ENCODE measurements at regions of chr1 and their contacts with region 1.

Region 1: GRCh38 chr1:16243936-16244649 is 7.1 kb upstream of the CPLANE2 start:
- DNase-seq: peak; percentile 78 to 83
- ATAC-seq: peak; percentile 64 to 69 (median 66)
- H3K4me3 ChIP-seq: no peak overlapping the region
- H3K27ac ChIP-seq: no peak overlapping the region
- H3K4me1 ChIP-seq: peaks cover 23% of the 10 kb centered on the region
- H3K27me3 ChIP-seq: no peaks in the 10 kb centered on the region
- CTCF ChIP-seq: peak; percentile 80

Region 2: DNA sequence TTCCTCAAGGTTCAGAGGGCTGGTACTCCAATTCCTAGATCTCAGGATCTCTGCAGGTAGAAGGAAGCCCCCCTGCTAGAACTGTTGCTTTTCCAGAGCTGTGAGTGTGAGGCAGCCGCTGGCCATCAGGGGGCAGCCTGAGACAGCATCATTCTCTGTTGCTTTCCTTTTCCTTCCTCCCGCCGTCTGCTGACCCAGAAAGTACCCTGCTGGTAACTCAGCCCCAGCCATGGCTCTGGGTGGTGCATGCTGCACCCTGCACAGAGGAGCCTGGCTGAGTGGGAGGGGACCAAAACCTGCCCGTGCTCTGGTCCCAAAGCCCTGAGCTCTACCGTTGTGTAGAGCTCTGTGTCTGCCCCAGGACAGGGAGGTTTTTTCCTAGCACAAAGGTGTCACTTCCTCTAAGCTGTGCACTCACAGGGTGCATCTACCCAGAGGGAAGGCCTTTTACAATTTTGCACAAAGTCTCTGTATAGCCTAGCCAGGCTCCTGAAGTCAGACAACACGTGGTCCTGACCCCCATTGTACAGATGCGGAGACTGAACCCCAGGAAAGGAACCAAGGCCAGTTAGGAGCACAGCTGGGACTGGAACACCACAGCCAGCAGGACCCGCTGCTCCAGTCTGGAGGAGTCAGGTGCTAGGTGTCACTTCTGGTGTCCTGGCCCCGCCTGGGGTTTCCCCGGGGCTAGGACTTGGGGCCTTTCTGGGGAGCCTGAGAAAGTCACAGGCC is 165.0 kb before region 1 on chr1:
- intact Hi-C with region 1: loop called (anchors 1 to 5 kb)
- DNase-seq: peak; percentile 78 to 84
- ATAC-seq: peak; percentile 64 to 76 (median 71)
- H3K4me3 ChIP-seq: no peak overlapping the region
- H3K27ac ChIP-seq: no peak overlapping the region
- H3K4me1 ChIP-seq: no peaks in the 10 kb centered on the region
- H3K27me3 ChIP-seq: peaks cover 0 to under 1% (median 0%) of the 10 kb centered on the region in 3 donors
- CTCF ChIP-seq: peak; percentile 86

Region 3: GRCh38 chr1:16187748-16188401 is 56.2 kb before region 1 on chr1:
- intact Hi-C with region 1: loop called in 1 of 2 experiments (anchors 2 kb)
- DNase-seq: peak; percentile 80 to 81
- ATAC-seq: peak; percentile 74 to 86 (median 77)
- H3K4me3 ChIP-seq: no peak overlapping the region
- H3K27ac ChIP-seq: no peak overlapping the region
- H3K4me1 ChIP-seq: no peaks in the 10 kb centered on the region
- H3K27me3 ChIP-seq: peaks cover 0 to 10% (median 9%) of the 10 kb centered on the region in 3 donors
- CTCF ChIP-seq: peak; percentile 93

Region 4: GRCh38 chr1:16258591-16259135 is 14.6 kb after region 1 on chr1:
- intact Hi-C with region 1: loop called in 1 of 2 experiments (anchors 2 kb)
- DNase-seq: no peak
- ATAC-seq: no peak
- H3K4me3 ChIP-seq: no peak overlapping the region
- H3K27ac ChIP-seq: no peak overlapping the region
- H3K4me1 ChIP-seq: no peaks in the 10 kb centered on the region
- H3K27me3 ChIP-seq: no peaks in the 10 kb centered on the region
- CTCF ChIP-seq: no peak

Region 5: DNA sequence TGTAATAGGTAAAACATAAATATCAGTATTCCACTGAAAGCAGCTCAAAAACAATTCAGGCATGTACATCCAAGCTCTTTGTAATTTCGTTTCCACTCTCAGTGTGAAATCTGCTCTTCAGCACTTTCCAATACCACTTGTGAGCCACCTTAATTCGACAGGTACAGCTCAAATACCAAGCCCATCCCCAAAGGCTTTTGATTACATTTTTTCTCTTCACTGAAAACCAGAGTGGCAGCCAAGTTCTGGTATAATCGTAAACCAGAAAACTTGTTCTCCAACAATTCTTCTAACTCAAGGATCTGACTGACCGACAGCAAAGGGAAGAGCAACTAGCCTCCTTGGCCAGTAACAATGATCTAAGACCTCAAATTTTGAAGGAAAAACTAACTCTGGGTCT is 71.3 kb after region 1 on chr1:
- intact Hi-C with region 1: no loop called
- DNase-seq: no peak
- ATAC-seq: no peak
- H3K4me3 ChIP-seq: no peak overlapping the region
- H3K27ac ChIP-seq: no peak overlapping the region
- H3K4me1 ChIP-seq: peaks cover 25% of the 10 kb centered on the region
- H3K27me3 ChIP-seq: no peaks in the 10 kb centered on the region
- CTCF ChIP-seq: no peak

Region 6: DNA sequence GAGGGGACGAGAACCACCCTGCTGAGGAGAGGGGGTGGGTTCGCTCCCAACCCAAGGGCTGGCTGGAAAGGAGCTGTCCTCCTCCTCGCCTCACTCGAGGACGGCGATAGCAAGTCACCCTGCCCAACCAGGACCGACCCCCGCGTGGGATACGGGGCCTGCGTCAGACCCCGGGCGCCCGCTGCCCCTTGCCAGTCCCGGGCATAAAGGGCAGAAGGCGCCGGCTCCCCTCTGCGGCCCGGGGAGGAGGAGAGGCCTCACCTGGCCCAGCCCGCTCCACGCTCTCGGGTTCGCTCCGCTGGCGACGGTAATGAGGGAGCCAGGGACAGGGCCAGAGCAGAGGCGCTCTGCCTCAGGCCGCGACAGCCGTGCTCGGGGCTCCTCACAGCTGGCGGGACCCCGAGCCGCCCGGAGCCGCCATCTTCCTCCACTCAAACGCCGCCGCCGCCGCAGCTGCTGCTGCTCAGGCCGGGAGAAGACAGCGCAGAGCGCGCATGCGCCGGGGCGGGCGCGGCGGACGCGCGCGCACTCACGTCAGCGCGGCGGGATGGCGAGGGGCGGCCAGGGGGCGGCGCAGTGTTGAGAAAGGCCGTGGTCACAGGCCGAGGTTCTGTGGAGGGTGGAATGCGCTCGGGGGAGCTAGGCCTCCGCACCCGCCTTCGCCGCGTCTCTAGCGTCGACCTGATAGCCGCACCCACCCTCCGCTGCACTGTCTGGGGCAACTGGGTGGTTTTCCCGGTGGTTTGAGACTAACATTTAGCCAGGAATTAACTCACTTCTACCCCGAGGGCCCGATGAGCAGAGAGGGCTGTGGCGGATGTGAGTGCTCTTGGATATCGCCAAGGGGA is 108.1 kb after region 1 on chr1 and contains the start of gene FBXO42:
- intact Hi-C with region 1: loop called in 1 of 2 experiments (anchors 10 kb)
- DNase-seq: peak; percentile 91 to 96
- ATAC-seq: peak; percentile 97 to 99 (median 98)
- H3K4me3 ChIP-seq: peak within 1 kb of the TSS; percentile 96
- H3K27ac ChIP-seq: peak within 1 kb of the TSS; percentile 97
- H3K4me1 ChIP-seq: peaks cover 34% of the 10 kb centered on the region
- H3K27me3 ChIP-seq: no peaks in the 10 kb centered on the region
- CTCF ChIP-seq: peak; percentile 36
- total RNA-seq, gene FBXO42: 14.7 to 24.4 (median 19.8) TPM

Region 7: GRCh38 chr1:16366722-16367257 is 122.7 kb after region 1 on chr1 and contains the start of gene SZRD1:
- intact Hi-C with region 1: loop called in 1 of 2 experiments (anchors 5 kb)
- DNase-seq: peak; percentile 97 to 98
- ATAC-seq: peak; percentile 91 to 94 (median 92)
- H3K4me3 ChIP-seq: peak within 1 kb of the TSS; percentile 88
- H3K27ac ChIP-seq: peak within 1 kb of the TSS; percentile 99
- H3K4me1 ChIP-seq: peaks cover 32% of the 10 kb centered on the region
- H3K27me3 ChIP-seq: no peaks in the 10 kb centered on the region
- CTCF ChIP-seq: no peak
- total RNA-seq, gene SZRD1: 80.7 to 144 (median 138) TPM

Measured in psoas muscle (tissue), 8 donors.